CD4-positive, alpha-beta T cell (primary cell): ENCODE measurements at regions of chr7 and their contacts with region 1.

Region 1: DNA sequence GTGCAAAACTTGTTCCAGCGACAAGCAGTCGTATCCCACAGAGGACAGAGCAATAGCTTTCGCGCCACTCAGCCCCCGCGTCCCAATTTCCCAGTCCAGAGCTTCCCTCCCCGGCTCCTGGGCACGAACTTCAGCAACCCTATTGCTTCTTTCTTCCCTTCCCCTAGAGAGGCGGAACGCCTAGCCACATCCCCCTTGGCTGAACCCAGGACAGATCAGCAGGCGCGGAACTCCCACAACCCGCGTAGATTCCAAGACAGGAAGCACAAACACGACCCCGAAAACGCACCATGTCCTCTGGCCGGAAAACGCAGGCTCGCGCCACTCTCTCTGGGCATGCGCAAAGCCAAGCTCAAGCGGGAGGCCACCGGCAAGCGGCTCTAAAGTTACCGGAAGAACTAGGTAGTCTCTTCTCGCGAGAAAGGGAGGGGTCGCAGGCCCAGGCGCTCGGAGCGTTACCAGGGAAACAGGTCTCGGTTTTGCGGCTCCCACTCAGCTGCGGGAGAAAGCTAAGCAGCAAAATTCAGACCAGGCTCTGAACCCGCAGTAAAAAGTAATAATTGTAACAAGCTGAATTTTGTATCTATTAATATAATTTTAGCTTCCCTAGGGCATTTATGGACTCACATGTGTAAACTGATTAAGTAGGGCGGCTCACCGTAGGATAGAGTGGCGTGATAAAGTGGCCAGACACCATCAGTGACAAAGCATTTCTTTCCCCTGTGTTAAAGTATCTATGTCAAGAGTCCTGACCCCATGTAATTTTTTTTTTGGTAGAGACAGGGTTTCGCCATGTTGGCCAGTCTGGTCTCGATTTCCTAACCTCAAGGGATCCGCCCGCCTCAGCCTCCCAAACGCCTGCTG is at the start of gene TMEM209:
- DNase-seq: peak; percentile 85 to 98 (median 91)
- ATAC-seq: peak; percentile 96
- H3K4me3 ChIP-seq: peak within 1 kb of the TSS; percentile 88
- H3K4me3 Mint-ChIP-seq: peak within 1 kb of the TSS; percentile 96
- H3K27ac ChIP-seq: peak within 1 kb of the TSS; percentile 81 to 87
- H3K27ac Mint-ChIP-seq: peak within 1 kb of the TSS; percentile 89
- H3K4me1 ChIP-seq: peaks cover 20% of the 10 kb centered on the region
- H3K4me1 Mint-ChIP-seq: peaks cover 40% of the 10 kb centered on the region
- H3K27me3 ChIP-seq: no peaks in the 10 kb centered on the region
- H3K27me3 Mint-ChIP-seq: no peaks in the 10 kb centered on the region
- CTCF ChIP-seq: no peak
- total RNA-seq, gene TMEM209: 18.3 to 18.8 TPM

Region 2: GRCh38 chr7:129952653-129953560 is 252.4 kb before region 1 on chr7 and contains the start of gene UBE2H:
- CTCF ChIA-PET with region 1: no interaction called
- POLR2A ChIA-PET with region 1: no interaction called
- intact Hi-C with region 1: loop called in 1 of 2 experiments (anchors 5 kb)
- DNase-seq: peak; percentile 84 to 96 (median 91)
- ATAC-seq: peak; percentile 75
- H3K4me3 ChIP-seq: peak within 1 kb of the TSS; percentile 78
- H3K4me3 Mint-ChIP-seq: peak within 1 kb of the TSS; percentile 99
- H3K27ac ChIP-seq: peak within 1 kb of the TSS; percentile 82 to 89
- H3K27ac Mint-ChIP-seq: no peak within 1 kb of the TSS
- H3K4me1 ChIP-seq: peaks cover 35% of the 10 kb centered on the region
- H3K4me1 Mint-ChIP-seq: peaks cover 6% of the 10 kb centered on the region
- H3K27me3 ChIP-seq: no peaks in the 10 kb centered on the region
- H3K27me3 Mint-ChIP-seq: no peaks in the 10 kb centered on the region
- CTCF ChIP-seq: no peak
- total RNA-seq, gene UBE2H: 52.1 to 52.5 TPM

Region 3: DNA sequence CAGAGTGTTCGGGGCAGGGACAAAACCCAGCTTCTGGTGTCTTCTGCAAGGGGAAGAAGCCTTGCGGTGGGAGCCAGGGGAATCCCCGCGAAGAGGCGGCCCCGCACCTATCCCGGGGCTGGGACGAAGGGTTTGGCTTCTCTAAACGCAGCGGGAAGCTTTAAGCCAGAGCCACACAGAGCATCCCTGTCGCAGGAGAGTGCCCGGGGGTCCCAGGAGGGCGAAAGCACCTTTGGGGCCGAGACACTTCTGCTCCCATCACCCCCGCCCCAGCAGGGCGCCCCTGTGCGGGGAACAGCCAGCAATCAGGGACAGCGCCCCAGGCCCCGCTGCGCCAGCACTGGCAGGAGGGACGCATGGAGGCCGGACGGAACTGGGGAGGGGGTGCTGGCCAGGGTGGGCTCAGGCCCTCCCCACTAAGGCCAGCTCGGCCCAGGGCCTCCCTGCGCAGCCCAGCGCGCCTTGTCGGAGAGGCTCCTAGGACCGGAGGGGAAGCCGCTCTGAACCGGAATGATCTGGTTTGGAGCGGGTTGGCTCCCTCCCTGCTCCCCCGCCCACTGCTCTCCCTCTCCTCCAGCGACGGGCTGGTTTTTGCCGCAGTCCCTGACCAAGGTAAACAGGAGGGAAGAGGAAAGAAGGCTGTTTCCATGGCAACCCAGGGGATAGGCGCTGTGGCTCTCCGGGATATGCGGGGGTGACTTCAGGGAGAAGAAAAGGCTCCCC is 64.0 kb before region 1 on chr7:
- CTCF ChIA-PET with region 1: no interaction called
- POLR2A ChIA-PET with region 1: interaction called, 14 read pairs
- intact Hi-C with region 1: no loop called
- DNase-seq: peak in 13 of 14 experiments; percentile 14 to 67 (median 47)
- ATAC-seq: peak; percentile 79
- H3K4me3 ChIP-seq: peak overlapping the region; percentile 65
- H3K4me3 Mint-ChIP-seq: peak overlapping the region; percentile 84
- H3K27ac ChIP-seq: peak overlapping the region; percentile 35 to 54
- H3K27ac Mint-ChIP-seq: peak overlapping the region; percentile 72
- H3K4me1 ChIP-seq: peaks cover 21% of the 10 kb centered on the region
- H3K4me1 Mint-ChIP-seq: peaks cover 26% of the 10 kb centered on the region
- H3K27me3 ChIP-seq: no peaks in the 10 kb centered on the region
- H3K27me3 Mint-ChIP-seq: no peaks in the 10 kb centered on the region
- CTCF ChIP-seq: no peak

Region 4: DNA sequence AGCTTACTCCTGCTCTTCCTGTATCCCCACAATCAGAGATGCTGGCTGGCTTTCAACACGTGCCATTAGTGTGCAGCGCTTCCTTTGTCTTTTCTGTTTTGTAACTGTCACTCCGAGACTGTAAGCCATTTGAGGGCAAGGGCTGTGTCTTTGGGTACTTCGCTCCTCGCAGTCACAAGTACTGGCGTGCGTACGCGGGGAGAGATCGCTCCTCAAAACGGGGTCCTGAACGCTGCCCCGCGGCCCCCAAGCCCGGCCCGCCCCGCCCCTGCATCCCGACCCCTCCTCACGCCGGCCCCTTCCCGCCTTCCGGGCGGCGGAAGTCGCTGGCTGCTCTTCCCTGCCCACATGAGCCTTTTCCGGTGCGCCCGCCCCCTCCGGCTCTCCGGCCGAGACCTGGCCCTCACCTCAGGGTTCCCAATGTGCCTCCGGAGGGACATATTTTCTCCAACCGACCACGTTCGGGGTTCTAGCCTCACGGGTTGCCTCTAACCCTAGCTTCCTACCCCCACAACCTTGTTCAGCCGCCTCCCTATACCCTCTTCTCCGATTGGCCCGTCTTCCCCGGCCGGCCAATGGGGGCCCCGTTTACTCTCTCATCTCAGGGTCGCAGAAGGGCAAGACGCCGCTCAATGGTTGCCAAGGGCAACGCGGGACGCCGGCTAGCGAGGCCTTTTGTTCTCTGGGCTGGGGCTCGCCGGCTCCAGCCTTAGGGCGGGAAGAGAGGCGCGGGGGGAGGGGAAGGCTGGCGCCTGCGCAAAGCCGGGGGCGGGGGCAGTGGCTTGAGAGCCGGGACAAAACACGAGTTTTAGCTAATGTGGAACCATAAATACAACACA is 235.4 kb after region 1 on chr7 and contains the start of gene CEP41:
- CTCF ChIA-PET with region 1: no interaction called
- POLR2A ChIA-PET with region 1: interaction called, 4 read pairs
- intact Hi-C with region 1: loop called in 1 of 2 experiments (anchors 5 kb)
- DNase-seq: peak; percentile 81 to 95 (median 86)
- ATAC-seq: peak; percentile 95
- H3K4me3 ChIP-seq: peak within 1 kb of the TSS; percentile 67
- H3K4me3 Mint-ChIP-seq: peak within 1 kb of the TSS; percentile 99
- H3K27ac ChIP-seq: peak within 1 kb of the TSS; percentile 58 to 65
- H3K27ac Mint-ChIP-seq: peak within 1 kb of the TSS; percentile 89
- H3K4me1 ChIP-seq: peaks cover 13% of the 10 kb centered on the region
- H3K4me1 Mint-ChIP-seq: peaks cover 59% of the 10 kb centered on the region
- H3K27me3 ChIP-seq: no peaks in the 10 kb centered on the region
- H3K27me3 Mint-ChIP-seq: no peaks in the 10 kb centered on the region
- CTCF ChIP-seq: no peak
- total RNA-seq, gene CEP41: 3.3 to 4.8 TPM

Region 5: DNA sequence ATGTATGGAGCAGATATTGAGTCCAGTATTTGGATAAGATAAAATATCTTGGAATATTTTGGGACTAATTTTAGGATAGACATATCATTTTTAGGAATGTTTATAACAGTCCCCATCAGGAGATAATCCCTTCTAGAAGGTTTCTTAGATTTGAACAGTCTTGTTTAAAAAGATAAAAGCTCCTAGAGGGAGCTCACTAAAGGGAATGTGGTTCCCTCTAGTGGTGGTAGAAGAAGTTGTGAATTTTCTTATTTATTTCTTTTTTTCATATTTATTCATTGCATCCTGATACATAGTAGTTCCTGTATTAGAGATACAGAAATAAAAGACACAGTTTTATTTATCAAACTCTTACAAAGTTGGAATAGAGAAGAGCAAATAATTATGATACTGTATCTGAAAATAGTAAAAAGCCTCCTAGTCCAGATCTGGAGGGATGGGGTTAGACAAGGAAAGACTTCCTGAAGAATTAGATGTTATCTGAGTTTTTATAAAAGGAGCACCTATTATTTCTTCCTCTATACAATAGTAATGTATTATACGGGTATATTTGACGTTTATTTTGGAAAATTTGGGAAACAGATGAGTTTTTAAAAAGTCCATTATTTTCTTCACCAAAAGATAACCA is 553.2 kb after region 1 on chr7:
- CTCF ChIA-PET with region 1: no interaction called
- POLR2A ChIA-PET with region 1: no interaction called
- intact Hi-C with region 1: loop called in 1 of 2 experiments (anchors 1 kb)
- DNase-seq: peak in 3 of 14 experiments; percentile 49 to 71 (median 67)
- ATAC-seq: peak; percentile 48
- H3K4me3 ChIP-seq: no peak overlapping the region
- H3K4me3 Mint-ChIP-seq: no peak overlapping the region
- H3K27ac ChIP-seq: no peak overlapping the region
- H3K27ac Mint-ChIP-seq: no peak overlapping the region
- H3K4me1 ChIP-seq: no peaks in the 10 kb centered on the region
- H3K4me1 Mint-ChIP-seq: no peaks in the 10 kb centered on the region
- H3K27me3 ChIP-seq: no peaks in the 10 kb centered on the region
- H3K27me3 Mint-ChIP-seq: peaks cover 7% of the 10 kb centered on the region
- CTCF ChIP-seq: peak; percentile 92